ENCODE measurements at regions of chr2 and their contacts with region 1.

Region 1: GRCh38 chr2:24382363-24383073 is 22.2 kb upstream of the ITSN2 start:
- DNase-seq: peak; percentile 57 to 58
- H3K4me3 ChIP-seq: no peak overlapping the region
- H3K27ac ChIP-seq: no peak overlapping the region
- H3K4me1 ChIP-seq: no peaks in the 10 kb centered on the region
- H3K27me3 ChIP-seq: no peaks in the 10 kb centered on the region
- CTCF ChIP-seq: peak; percentile 72

Region 2: GRCh38 chr2:23824777-23825212 is 557.7 kb before region 1 on chr2:
- CTCF ChIA-PET with region 1: no interaction called
- POLR2A ChIA-PET with region 1: no interaction called
- intact Hi-C with region 1: loop called (anchors 1 kb)
- DNase-seq: peak; percentile 17 to 41
- H3K4me3 ChIP-seq: no peak overlapping the region
- H3K27ac ChIP-seq: no peak overlapping the region
- H3K4me1 ChIP-seq: peaks cover 18% of the 10 kb centered on the region
- H3K27me3 ChIP-seq: no peaks in the 10 kb centered on the region
- CTCF ChIP-seq: peak; percentile 88

Region 3: GRCh38 chr2:23988371-23988770 is 394.1 kb before region 1 on chr2:
- CTCF ChIA-PET with region 1: no interaction called
- POLR2A ChIA-PET with region 1: no interaction called
- intact Hi-C with region 1: loop called (anchors 10 kb)
- DNase-seq: no peak
- H3K4me3 ChIP-seq: no peak overlapping the region
- H3K27ac ChIP-seq: no peak overlapping the region
- H3K4me1 ChIP-seq: no peaks in the 10 kb centered on the region
- H3K27me3 ChIP-seq: no peaks in the 10 kb centered on the region
- CTCF ChIP-seq: peak; percentile 73

Region 4: DNA sequence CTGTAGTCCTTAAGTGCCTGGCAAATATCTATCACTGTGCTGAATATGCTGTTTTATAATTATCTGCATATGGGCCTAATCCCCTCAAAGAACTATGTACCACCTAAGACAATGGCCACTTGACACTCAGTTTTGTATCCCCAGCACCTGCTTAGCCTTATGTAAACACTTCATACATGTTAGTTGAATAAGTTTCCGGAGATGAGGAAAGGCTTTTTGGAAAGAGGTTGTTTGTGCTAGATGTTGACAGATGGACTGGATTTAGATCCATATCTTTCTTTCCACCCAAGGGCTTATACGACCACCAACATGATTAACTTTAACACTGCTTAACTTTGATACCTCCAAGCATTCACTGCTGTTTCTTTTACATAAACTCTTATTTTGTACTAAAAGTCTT is 144.4 kb before region 1 on chr2:
- CTCF ChIA-PET with region 1: no interaction called
- POLR2A ChIA-PET with region 1: no interaction called
- intact Hi-C with region 1: loop called (anchors 5 kb)
- DNase-seq: no peak
- H3K4me3 ChIP-seq: no peak overlapping the region
- H3K27ac ChIP-seq: no peak overlapping the region
- H3K4me1 ChIP-seq: no peaks in the 10 kb centered on the region
- H3K27me3 ChIP-seq: no peaks in the 10 kb centered on the region
- CTCF ChIP-seq: no peak

Region 5: GRCh38 chr2:24334245-24334633 is 48.3 kb before region 1 on chr2:
- CTCF ChIA-PET with region 1: no interaction called
- POLR2A ChIA-PET with region 1: no interaction called
- intact Hi-C with region 1: no loop called
- DNase-seq: peak; percentile 6 to 38
- H3K4me3 ChIP-seq: no peak overlapping the region
- H3K27ac ChIP-seq: no peak overlapping the region
- H3K4me1 ChIP-seq: no peaks in the 10 kb centered on the region
- H3K27me3 ChIP-seq: no peaks in the 10 kb centered on the region
- CTCF ChIP-seq: no peak

Region 6: DNA sequence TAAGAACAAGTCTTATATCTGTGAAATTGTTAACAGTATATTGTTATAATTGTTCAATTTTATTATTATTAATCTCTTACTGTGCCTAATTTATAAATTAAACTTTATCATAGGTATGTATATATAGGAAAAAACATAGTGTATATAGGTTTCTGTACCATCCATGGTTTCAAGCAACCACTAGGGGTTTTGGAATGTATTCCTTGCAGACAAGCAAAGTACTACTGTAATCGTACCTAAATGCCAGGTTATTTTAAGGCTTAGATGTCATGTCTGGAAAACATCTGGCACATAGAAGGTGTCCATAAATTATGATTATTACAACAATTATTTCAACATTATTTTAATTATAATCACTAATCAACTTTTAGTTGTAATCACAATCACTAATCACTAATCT is 30.5 kb before region 1 on chr2:
- CTCF ChIA-PET with region 1: no interaction called
- POLR2A ChIA-PET with region 1: no interaction called
- intact Hi-C with region 1: no loop called
- DNase-seq: no peak
- H3K4me3 ChIP-seq: no peak overlapping the region
- H3K27ac ChIP-seq: no peak overlapping the region
- H3K4me1 ChIP-seq: no peaks in the 10 kb centered on the region
- H3K27me3 ChIP-seq: no peaks in the 10 kb centered on the region
- CTCF ChIP-seq: no peak

Measured in PC-9 (cell line).